Right cardiac atrium (tissue), 5 donors: ENCODE measurements at regions of chr20 and their contacts with region 1.

Region 1: DNA sequence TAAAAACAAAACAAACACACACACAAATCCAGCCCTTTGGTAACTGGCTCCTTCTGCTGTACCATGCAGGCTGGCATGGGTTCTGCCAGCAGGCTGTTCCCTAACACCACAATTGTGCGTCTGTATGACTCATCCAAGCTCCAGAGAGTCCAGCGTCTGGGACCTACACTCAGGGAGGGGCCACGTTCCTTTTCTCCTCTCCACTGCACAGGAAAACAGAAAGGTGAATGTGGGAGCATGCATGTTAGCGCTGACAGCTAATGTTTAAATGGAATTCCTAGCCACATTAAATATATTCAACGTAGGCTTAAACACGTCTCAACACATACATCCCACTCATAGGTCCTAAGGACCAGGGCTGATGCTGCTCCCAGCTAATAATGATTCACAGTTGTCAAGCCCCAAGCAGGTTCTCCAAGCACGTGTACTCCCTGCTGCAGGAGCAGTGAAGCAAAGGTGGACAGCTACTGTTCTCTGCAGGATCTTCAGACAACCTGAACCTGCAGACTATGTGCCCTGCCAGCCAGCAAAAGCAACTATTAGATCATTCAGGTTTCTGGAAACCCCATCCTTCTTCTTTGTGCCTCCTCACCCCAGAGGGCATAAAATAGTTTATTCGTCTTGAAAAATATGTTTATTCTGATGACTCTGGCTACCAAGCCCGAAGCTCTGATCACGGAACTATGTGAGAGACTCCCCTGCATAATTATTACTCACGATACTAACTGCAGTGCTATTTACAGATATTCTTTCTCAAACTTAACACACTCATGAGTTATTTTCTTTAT is 20.9 kb downstream of the MAP1LC3A start:
- DNase-seq: peak; percentile 64 to 85 (median 82)
- ATAC-seq: peak; percentile 86 to 87
- H3K4me3 ChIP-seq: no peak overlapping the region
- H3K27ac ChIP-seq: no peak overlapping the region
- H3K4me1 ChIP-seq: peaks cover 5% of the 10 kb centered on the region
- H3K27me3 ChIP-seq: no peaks in the 10 kb centered on the region

Region 2: GRCh38 chr20:34768096-34768495 is 188.7 kb after region 1 on chr20:
- intact Hi-C with region 1: loop called (anchors 2 to 10 kb)
- DNase-seq: no peak
- ATAC-seq: no peak
- H3K4me3 ChIP-seq: no peak overlapping the region
- H3K27ac ChIP-seq: no peak overlapping the region
- H3K4me1 ChIP-seq: no peaks in the 10 kb centered on the region
- H3K27me3 ChIP-seq: no peaks in the 10 kb centered on the region